ENCODE measurements at regions of chr4 and their contacts with region 1.

Region 1: DNA sequence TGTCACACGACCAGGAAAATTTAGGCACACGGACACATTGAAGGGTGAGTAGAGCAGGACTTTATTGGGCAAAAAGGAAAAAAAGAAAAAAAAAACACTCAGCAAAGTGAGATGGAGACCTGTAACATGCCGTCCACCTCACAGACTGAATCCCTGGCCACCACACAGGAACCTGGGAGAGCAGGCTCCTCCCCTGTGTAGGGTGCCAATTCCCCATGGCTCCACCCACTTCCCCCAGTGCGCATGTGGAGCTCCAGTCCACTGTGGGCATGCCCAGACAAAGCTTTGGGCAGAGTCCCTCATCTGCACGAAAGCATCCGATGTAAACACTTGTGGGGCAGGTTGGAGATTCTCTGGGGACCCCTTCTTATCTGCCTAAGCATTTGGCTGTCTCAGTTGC is 23.6 kb upstream of the CBR4 start:
- DNase-seq: peak; percentile 62
- ATAC-seq: peak; percentile 94
- H3K4me3 ChIP-seq: peak overlapping the region in 1 of 2 experiments; percentile 14; a peak in 1 of 4 replicates
- H3K27ac ChIP-seq: peak overlapping the region; percentile 43; the same call in 1 of the 2 replicates
- H3K4me1 ChIP-seq: peaks cover 15 to 59% of the 10 kb centered on the region in 2 experiments; a peak in 3 of 4 replicates
- H3K27me3 ChIP-seq: no peaks in the 10 kb centered on the region
- CTCF ChIP-seq: no peak
- POLR2A ChIP-seq: no peak
- RAD21 ChIP-seq: no peak

Region 2: GRCh38 chr4:169254546-169254983 is 220.9 kb after region 1 on chr4:
- CTCF ChIA-PET with region 1: no interaction called
- POLR2A ChIA-PET with region 1: no interaction called
- RAD21 ChIA-PET with region 1: no interaction called
- intact Hi-C with region 1: no loop called
- DNase-seq: peak; percentile 62
- ATAC-seq: peak; percentile 15
- H3K4me3 ChIP-seq: peak overlapping the region; percentile 10 to 44
- H3K27ac ChIP-seq: peak overlapping the region; percentile 82
- H3K4me1 ChIP-seq: peaks cover 87 to 99% of the 10 kb centered on the region in 2 experiments
- H3K27me3 ChIP-seq: no peaks in the 10 kb centered on the region
- CTCF ChIP-seq: no peak
- POLR2A ChIP-seq: no peak
- RAD21 ChIP-seq: no peak

Region 3: DNA sequence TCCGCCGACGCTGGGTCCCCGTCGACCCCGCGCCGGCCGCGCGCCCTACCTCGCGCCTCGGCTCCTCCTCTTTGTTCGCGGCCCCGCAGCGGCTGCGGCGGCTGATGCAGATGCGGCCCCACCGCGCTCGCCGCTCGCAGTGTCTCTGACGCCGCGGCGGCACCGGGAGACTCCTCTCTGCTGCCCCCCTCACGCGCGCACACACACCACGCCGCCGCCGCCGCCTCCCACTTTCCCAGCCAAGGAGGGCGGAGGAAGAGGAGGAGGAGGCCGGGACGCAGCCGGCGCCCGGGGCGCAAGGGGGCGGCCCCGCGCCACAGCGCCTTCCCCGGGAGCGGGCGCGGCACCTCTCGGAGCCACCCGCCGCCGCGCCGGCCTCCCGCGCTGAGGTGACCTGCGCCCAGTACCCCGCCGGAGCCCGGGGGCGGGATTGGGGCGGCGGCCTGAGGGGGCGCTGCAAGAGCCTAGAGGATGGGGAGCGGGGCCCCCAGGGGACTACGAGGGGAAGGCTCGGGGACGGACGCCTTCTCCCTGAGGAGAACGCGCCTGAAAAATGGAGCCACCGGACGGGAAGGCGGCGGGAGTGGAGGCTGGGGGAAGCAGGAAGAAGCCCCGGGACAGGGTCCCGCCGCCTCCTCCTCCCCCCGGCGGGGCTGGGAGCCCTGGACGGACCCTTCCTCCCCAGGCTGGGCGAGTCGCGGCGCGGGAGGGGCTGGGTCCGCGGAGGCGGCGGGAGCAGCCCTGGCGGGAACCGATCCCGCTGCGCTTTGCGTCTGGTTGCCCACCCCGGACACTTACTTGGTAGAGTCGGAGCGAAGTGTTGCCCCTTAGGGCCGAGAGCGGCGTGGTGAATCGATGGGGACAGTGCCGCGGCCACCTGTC is 237.4 kb after region 1 on chr4 and contains the start of gene SH3RF1:
- CTCF ChIA-PET with region 1: no interaction called
- POLR2A ChIA-PET with region 1: no interaction called
- RAD21 ChIA-PET with region 1: no interaction called
- intact Hi-C with region 1: loop called (anchors 5 kb)
- DNase-seq: no peak
- ATAC-seq: peak; percentile 87
- H3K4me3 ChIP-seq: peak within 1 kb of the TSS; percentile 75 to 87
- H3K27ac ChIP-seq: peak within 1 kb of the TSS; percentile 88
- H3K4me1 ChIP-seq: peaks cover 30 to 51% of the 10 kb centered on the region in 2 experiments
- H3K27me3 ChIP-seq: no peaks in the 10 kb centered on the region
- CTCF ChIP-seq: no peak; a peak in 1 of 6 replicates
- POLR2A ChIP-seq: peak; percentile 58
- RAD21 ChIP-seq: no peak
- total RNA-seq, gene SH3RF1: 59.5 TPM

Measured in HCT116 (cell line).